Activated B cell treated with CpG ODN at 0.5 μM for 24 hours (primary cell): ENCODE measurements at regions of chr6 and their contacts with region 1.

Region 1: DNA sequence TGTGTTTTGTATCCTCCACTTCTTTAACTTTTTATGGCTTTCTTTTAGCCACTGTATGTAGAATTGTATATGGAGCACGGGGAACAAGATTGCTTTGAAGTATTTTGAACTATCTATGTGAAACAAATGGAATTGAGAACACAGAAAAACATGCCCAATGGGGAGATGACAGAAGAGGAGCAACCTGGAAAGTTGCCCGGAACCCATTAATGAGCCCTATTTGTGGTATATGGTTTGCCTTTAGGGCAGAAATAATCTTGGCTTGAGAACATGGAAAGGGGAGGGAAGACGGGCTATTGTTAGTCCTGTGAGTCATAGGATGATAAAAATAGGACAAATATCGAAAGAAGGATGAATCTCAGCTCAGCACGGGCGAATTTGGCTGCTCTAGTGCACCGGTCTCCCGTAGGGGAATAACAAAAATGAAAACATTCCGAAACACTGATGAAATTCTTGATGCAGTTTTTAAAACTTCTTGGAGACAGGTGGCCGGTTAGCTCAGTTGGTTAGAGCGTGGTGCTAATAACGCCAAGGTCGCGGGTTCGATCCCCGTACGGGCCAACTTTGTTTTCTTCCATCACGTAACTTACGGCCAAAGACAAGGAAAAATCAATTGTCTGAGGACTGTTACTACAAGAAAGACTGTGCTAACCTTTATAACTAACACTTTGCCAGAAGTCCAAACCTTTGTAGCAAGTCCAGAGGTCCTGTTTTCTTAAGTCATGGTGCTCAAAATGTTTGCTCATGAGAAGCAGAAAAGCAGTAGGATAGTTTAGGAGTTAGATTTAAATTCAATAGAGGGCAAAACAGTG is 15.7 kb downstream of the HMGN4 start:
- DNase-seq: peak; percentile 67
- ATAC-seq: peak; percentile 46
- H3K4me3 Mint-ChIP-seq: no peak overlapping the region
- H3K27ac Mint-ChIP-seq: no peak overlapping the region
- H3K4me1 Mint-ChIP-seq: peaks cover 28% of the 10 kb centered on the region
- H3K27me3 Mint-ChIP-seq: no peaks in the 10 kb centered on the region
- CTCF ChIP-seq: no peak

Region 2: DNA sequence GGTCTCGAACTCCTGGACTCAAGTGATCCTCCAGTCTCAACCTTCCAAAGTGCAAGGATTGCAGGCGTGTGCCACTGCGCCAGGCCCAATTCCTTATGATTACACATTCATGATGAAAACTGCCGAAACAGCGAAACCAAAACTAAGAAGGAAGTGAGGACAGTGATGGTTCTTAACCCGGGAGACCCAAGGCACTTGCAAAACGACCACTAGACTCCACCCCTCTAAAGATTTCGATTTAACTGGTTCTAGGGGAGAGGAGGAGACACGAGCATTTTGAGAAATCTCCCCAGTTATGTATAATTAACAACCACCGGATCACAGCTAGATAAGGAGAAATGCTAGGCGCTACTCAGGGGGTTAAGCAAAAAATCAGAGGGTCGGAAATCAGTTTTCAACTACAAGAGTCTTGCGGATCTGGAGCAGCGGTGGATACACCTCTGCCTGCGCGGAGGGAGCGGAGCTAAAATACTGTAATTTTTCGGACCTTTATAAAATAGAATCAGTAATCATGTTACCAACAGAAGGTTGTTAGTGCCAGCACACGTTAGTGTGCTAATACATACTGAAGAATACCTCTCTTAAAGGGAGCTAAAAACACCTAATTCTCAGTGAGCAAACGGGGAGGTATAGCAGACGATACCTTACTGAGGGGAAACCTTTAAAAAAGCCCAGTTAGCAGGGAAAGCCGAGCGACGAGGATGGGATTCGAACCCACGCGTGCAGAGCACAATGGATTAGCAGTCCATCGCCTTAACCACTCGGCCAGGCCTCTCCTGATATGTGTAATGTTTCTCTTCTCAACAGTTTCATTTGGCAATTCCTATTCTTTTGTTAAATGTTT is 248.8 kb before region 1 on chr6:
- CTCF ChIA-PET with region 1: no interaction called
- POLR2A ChIA-PET with region 1: no interaction called
- intact Hi-C with region 1: loop called (anchors 1 kb)
- DNase-seq: peak; percentile 39
- ATAC-seq: peak; percentile 87
- H3K4me3 Mint-ChIP-seq: peak overlapping the region; percentile 93
- H3K27ac Mint-ChIP-seq: peak overlapping the region; percentile 96
- H3K4me1 Mint-ChIP-seq: peaks cover 17% of the 10 kb centered on the region
- H3K27me3 Mint-ChIP-seq: no peaks in the 10 kb centered on the region
- CTCF ChIP-seq: no peak

Region 3: GRCh38 chr6:26322645-26323482 is 231.0 kb before region 1 on chr6:
- CTCF ChIA-PET with region 1: no interaction called
- POLR2A ChIA-PET with region 1: interaction called, 13 read pairs
- intact Hi-C with region 1: loop called (anchors 1 kb)
- DNase-seq: no peak
- ATAC-seq: peak; percentile 56
- H3K4me3 Mint-ChIP-seq: peak overlapping the region; percentile 89
- H3K27ac Mint-ChIP-seq: peak overlapping the region; percentile 85
- H3K4me1 Mint-ChIP-seq: peaks cover 25% of the 10 kb centered on the region
- H3K27me3 Mint-ChIP-seq: peaks cover 14% of the 10 kb centered on the region
- CTCF ChIP-seq: no peak

Region 4: DNA sequence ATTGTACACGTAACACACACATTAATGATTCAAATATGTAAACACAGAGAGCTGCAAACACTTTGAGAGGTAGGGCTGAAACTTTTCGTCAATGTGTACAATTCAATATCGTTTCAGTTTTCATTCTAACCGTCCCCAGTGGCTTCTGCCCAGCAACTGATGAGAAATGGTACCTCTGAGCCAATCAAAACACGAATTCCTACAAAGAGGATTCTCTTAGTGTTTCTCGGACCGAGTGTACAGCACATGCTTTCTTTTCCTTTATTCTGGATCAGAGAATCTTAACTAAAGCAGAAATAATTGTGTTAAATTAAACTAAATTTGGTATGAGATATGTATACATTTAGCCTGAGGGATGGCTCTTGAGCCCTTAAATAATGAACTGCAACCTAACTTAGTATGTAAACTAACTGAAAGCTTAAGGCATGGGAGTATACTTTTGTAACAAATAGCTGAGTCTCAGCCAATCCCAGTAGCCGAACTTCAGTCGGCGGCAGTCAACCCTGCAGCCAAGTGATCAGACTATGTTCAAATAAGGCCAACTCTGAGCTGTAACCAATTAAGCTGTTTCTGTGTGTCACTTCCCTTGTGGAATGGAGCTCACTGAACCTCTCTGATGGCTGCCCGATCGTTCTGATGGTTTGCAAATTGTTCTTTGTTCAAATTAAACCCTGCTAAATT is 79.9 kb before region 1 on chr6:
- CTCF ChIA-PET with region 1: interaction called, 3 read pairs
- POLR2A ChIA-PET with region 1: interaction called, 13 read pairs
- intact Hi-C with region 1: no loop called
- DNase-seq: peak; percentile 49
- ATAC-seq: peak; percentile 94
- H3K4me3 Mint-ChIP-seq: peak overlapping the region; percentile 96
- H3K27ac Mint-ChIP-seq: peak overlapping the region; percentile 100
- H3K4me1 Mint-ChIP-seq: peaks cover 70% of the 10 kb centered on the region
- H3K27me3 Mint-ChIP-seq: no peaks in the 10 kb centered on the region
- CTCF ChIP-seq: no peak

Region 5: DNA sequence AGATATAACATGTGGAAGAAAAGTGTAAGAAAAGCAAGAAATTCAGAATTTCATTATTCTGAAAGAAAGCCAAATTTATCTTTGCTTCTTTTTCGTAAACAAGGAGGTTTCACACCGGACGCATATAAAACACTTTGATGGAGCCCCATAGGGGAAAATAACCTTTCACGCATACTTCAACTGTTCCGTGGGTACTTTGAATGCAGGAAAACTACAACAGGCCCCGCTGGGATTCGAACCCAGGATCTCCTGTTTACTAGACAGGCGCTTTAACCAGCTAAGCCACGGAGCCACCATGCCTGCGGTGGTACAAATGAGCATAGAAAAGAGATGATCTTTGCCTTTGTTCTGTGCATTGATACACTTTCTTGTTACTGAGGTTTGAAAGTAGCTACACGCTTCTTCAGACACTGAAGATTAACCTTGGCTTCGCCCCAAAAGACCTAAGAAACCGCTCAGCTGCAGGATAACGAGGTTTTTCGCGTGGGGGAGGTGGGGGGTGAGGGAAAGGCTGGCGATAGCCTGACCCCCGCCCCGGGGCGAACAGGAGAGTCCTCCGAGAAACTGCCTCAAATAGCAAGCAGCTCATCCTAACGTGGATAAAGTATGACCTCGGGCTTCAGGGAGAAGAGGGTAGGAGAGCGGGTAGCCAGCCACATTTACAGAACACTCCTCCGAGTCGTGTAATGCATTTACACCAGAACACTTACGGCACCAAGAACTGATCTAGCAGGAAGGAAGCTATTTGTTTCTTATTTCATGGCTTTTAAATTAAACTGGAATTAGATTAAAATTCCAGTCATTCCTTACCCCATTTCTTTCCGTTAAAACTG is 20.9 kb before region 1 on chr6:
- CTCF ChIA-PET with region 1: interaction called, 10 read pairs
- POLR2A ChIA-PET with region 1: interaction called, 58 read pairs
- intact Hi-C with region 1: loop called (anchors 1 kb)
- DNase-seq: peak; percentile 73
- ATAC-seq: peak; percentile 38
- H3K4me3 Mint-ChIP-seq: peak overlapping the region; percentile 92
- H3K27ac Mint-ChIP-seq: peak overlapping the region; percentile 91
- H3K4me1 Mint-ChIP-seq: peaks cover 47% of the 10 kb centered on the region
- H3K27me3 Mint-ChIP-seq: peaks cover 8% of the 10 kb centered on the region
- CTCF ChIP-seq: no peak

Region 6: GRCh38 chr6:26568601-26569432 is 15.0 kb after region 1 on chr6:
- CTCF ChIA-PET with region 1: interaction called, 12 read pairs
- POLR2A ChIA-PET with region 1: interaction called, 25 read pairs
- intact Hi-C with region 1: loop called (anchors 1 kb)
- DNase-seq: peak; percentile 98
- ATAC-seq: peak; percentile 80
- H3K4me3 Mint-ChIP-seq: peak overlapping the region; percentile 96
- H3K27ac Mint-ChIP-seq: peak overlapping the region; percentile 98
- H3K4me1 Mint-ChIP-seq: peaks cover 26% of the 10 kb centered on the region
- H3K27me3 Mint-ChIP-seq: peaks cover 3% of the 10 kb centered on the region
- CTCF ChIP-seq: no peak